ENCODE measurements at regions of chr2 and their contacts with region 1.

Region 1: DNA sequence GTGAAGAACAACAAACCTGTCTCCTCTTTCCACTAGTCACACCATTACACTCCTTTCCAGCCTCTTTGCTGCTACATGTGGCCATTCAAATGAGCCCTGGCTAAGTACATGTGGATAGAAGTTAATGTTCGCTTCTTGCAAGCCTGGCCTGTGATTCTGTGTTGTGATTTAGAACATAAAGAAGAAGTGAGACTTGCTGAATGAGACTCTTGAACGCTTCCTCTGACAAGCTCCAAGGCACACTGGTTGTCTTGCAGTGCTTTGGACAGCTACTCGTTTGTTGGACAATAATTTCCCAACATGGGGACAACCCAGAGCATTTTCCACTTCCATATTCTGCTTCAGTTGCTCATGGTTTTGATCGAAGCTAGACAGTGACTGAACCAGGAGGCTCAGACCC is 57.3 kb downstream of the CCDC74A start:
- DNase-seq: peak; percentile 91
- H3K4me3 ChIP-seq: peak overlapping the region; percentile 21
- H3K27ac ChIP-seq: peak overlapping the region; percentile 87
- H3K4me1 ChIP-seq: peaks cover 100% of the 10 kb centered on the region
- CTCF ChIP-seq: no peak

Region 2: GRCh38 chr2:131521961-131522794 is 62.8 kb before region 1 on chr2:
- CTCF ChIA-PET with region 1: no interaction called
- POLR2A ChIA-PET with region 1: interaction called, 5 read pairs
- intact Hi-C with region 1: loop called (anchors 5 kb)
- DNase-seq: no peak
- H3K4me3 ChIP-seq: no peak overlapping the region
- H3K27ac ChIP-seq: no peak overlapping the region
- H3K4me1 ChIP-seq: peaks cover 11% of the 10 kb centered on the region
- CTCF ChIP-seq: no peak

Region 3: GRCh38 chr2:131635611-131636010 is 50.7 kb after region 1 on chr2:
- CTCF ChIA-PET with region 1: no interaction called
- POLR2A ChIA-PET with region 1: interaction called, 3 read pairs
- intact Hi-C with region 1: loop called (anchors 2 kb)
- DNase-seq: no peak
- H3K4me3 ChIP-seq: no peak overlapping the region
- H3K27ac ChIP-seq: no peak overlapping the region
- H3K4me1 ChIP-seq: peaks cover 6% of the 10 kb centered on the region
- CTCF ChIP-seq: no peak

Region 4: DNA sequence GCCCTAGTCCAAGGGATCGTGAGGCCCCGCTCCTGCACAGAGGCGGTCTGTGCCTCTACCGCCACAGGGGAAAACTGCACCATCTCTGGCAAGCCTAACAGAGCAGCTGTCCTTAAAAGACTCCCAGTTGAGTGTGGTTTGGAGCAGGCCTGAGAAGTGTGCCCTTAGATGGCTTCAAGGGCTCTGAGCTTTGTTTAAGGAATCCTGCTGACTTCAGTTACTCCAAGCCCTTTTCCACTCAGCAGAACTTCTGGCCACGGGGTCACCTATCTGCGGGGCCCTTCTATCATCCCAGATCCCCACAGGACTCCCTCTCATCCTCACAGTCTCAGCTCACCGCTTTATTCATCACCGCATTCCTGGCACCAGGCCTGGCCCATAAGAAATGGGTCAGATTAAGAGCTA is 74.2 kb after region 1 on chr2:
- CTCF ChIA-PET with region 1: no interaction called
- POLR2A ChIA-PET with region 1: no interaction called
- intact Hi-C with region 1: no loop called
- DNase-seq: no peak
- H3K4me3 ChIP-seq: no peak overlapping the region
- H3K27ac ChIP-seq: no peak overlapping the region
- H3K4me1 ChIP-seq: peaks cover 9% of the 10 kb centered on the region
- CTCF ChIP-seq: no peak